ENCODE measurements at regions of chr11 and their contacts with region 1.

Region 1: DNA sequence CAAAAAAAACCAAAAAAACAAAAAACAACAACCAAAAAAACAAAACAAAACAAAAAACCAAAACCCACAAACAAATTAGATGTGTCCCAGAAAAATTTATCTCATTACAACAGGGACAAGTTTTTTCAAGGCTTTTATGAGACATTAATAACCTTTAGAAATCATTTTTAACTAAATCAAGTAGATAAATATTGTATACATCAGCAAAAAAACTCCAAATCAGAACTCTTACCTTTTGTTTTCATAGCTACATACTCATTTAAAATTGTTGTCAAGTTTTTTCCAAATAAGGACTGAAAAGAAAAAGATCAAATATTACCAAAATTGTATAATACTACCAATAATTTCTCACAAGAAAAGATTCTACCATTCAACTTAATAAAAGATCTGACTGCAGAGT is 28.7 kb downstream of the NPAT start:
- DNase-seq: no peak
- ATAC-seq: no peak
- H3K4me3 ChIP-seq: no peak overlapping the region
- H3K4me3 Mint-ChIP-seq: no peak overlapping the region
- H3K27ac ChIP-seq: no peak overlapping the region
- H3K27ac Mint-ChIP-seq: peak overlapping the region in 6 of 9 donors; percentile 18 to 84 (median 34)
- H3K4me1 ChIP-seq: peaks cover 0 to 15% of the 10 kb centered on the region in 2 donors
- H3K4me1 Mint-ChIP-seq: peaks cover 4 to 43% (median 30%) of the 10 kb centered on the region in 7 donors
- H3K27me3 ChIP-seq: no peaks in the 10 kb centered on the region
- H3K27me3 Mint-ChIP-seq: no peaks in the 10 kb centered on the region

Region 2: GRCh38 chr11:108008656-108009496 is 184.8 kb before region 1 on chr11 and contains the start of gene CUL5:
- CTCF ChIA-PET with region 1: no interaction called
- POLR2A ChIA-PET with region 1: no interaction called
- intact Hi-C with region 1: no loop called
- DNase-seq: peak; percentile 84 to 94 (median 90)
- ATAC-seq: peak; percentile 94
- H3K4me3 ChIP-seq: peak within 1 kb of the TSS; percentile 94
- H3K4me3 Mint-ChIP-seq: peak within 1 kb of the TSS in 9 of 10 donors; percentile 89 to 100 (median 99)
- H3K27ac ChIP-seq: peak within 1 kb of the TSS; percentile 94
- H3K27ac Mint-ChIP-seq: peak within 1 kb of the TSS; percentile 94 to 99 (median 96)
- H3K4me1 ChIP-seq: peaks cover 15 to 25% of the 10 kb centered on the region in 2 donors
- H3K4me1 Mint-ChIP-seq: peaks cover 7 to 18% (median 12%) of the 10 kb centered on the region in 7 donors
- H3K27me3 ChIP-seq: no peaks in the 10 kb centered on the region
- H3K27me3 Mint-ChIP-seq: no peaks in the 10 kb centered on the region
- total RNA-seq, gene CUL5: 32.3 to 59.7 (median 39.2) TPM

Region 3: DNA sequence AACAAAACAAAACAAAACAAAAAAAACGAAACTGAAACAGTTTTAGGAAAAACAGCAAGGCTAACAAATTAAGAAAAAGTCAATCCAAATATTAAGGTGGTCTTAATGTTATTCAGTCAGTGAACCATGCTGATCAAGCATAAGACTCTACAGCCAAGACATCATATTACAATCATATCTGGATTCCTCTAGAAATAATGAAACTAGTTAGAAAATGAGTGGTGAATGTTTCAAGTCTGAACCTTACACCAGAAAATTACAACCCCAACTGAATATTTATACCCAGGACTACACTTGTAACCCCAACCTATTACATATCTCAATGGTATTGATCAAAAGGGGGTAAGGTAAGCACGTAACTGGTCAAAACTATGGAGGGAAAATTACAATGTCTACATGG is 23.5 kb before region 1 on chr11:
- CTCF ChIA-PET with region 1: no interaction called
- POLR2A ChIA-PET with region 1: no interaction called
- intact Hi-C with region 1: loop called in 1 of 2 experiments (anchors 2 kb)
- DNase-seq: no peak
- ATAC-seq: no peak
- H3K4me3 ChIP-seq: no peak overlapping the region
- H3K4me3 Mint-ChIP-seq: peak overlapping the region in 1 of 10 donors; percentile 3
- H3K27ac ChIP-seq: no peak overlapping the region
- H3K27ac Mint-ChIP-seq: peak overlapping the region; percentile 50 to 92 (median 76)
- H3K4me1 ChIP-seq: no peaks in the 10 kb centered on the region
- H3K4me1 Mint-ChIP-seq: peaks cover 16 to 47% (median 25%) of the 10 kb centered on the region in 7 donors
- H3K27me3 ChIP-seq: no peaks in the 10 kb centered on the region
- H3K27me3 Mint-ChIP-seq: no peaks in the 10 kb centered on the region